ENCODE measurements at regions of chr2 and their contacts with region 1.

Region 1: DNA sequence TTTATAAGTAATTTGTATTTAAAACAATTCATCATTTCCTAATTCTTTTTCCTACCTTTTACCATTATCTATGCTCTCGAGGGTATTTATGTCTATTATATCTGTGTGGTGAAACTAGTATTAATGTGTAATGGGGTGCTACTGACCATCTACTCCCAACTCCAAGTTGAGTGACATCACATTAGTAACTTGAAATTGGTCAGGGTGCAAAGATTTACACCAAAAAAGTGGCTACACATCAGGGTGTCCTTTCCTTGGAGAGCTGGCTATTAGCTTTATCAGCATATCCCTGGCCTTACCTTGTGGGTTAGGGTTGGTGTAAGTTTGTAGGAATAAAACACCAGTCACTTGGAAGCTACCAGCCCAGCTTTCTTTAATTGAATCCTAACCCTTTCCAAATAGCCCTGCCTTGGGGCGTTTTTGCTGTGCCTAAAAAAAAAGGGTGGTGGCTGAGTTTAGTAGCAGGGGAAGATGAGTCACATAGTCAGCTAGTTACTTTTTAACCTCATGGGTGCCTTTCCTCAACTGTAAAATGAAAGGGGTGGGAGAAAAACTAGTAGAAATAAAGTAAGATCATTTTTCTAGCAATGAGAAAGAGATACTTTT is 14.0 kb downstream of the ANXA4 start:
- DNase-seq: peak; percentile 76
- H3K4me3 Mint-ChIP-seq: no peak overlapping the region
- H3K27ac Mint-ChIP-seq: peak overlapping the region; percentile 48
- H3K4me1 Mint-ChIP-seq: peaks cover 25% of the 10 kb centered on the region
- H3K27me3 Mint-ChIP-seq: no peaks in the 10 kb centered on the region

Region 2: DNA sequence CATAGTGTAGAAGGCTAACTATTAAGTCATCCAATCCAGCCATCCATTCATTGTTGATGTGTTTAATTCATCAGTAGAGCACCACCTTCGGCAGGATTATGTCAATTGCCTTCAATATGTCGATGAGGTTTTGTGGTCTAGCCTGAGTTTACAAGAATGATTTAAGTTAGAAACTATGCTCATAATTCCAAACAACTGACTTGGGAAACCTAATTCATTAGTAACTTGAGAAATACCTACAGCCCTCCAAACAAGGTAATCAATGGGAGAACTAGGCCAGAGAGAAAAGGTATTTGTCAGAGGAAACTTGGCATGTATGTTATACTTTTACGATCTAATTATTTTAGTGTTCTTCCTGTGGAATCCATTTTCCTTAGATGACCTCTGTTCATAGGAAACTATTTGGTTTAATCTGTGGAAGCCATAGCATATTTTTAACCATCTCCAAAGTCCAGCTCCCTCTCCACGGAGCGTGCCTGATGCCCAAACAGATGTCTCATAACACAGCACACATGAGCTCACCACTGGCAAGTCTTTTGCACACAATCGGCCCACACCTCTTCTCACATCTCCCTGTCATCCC is 517.4 kb before region 1 on chr2:
- intact Hi-C with region 1: no loop called
- DNase-seq: no peak
- H3K4me3 Mint-ChIP-seq: no peak overlapping the region
- H3K27ac Mint-ChIP-seq: no peak overlapping the region
- H3K4me1 Mint-ChIP-seq: no peaks in the 10 kb centered on the region
- H3K27me3 Mint-ChIP-seq: peaks cover 16% of the 10 kb centered on the region

Region 3: GRCh38 chr2:69724540-69725159 is 31.3 kb before region 1 on chr2:
- intact Hi-C with region 1: no loop called
- DNase-seq: peak; percentile 96
- H3K4me3 Mint-ChIP-seq: peak overlapping the region; percentile 70
- H3K27ac Mint-ChIP-seq: no peak overlapping the region
- H3K4me1 Mint-ChIP-seq: peaks cover 3% of the 10 kb centered on the region
- H3K27me3 Mint-ChIP-seq: peaks cover 3% of the 10 kb centered on the region

Region 4: DNA sequence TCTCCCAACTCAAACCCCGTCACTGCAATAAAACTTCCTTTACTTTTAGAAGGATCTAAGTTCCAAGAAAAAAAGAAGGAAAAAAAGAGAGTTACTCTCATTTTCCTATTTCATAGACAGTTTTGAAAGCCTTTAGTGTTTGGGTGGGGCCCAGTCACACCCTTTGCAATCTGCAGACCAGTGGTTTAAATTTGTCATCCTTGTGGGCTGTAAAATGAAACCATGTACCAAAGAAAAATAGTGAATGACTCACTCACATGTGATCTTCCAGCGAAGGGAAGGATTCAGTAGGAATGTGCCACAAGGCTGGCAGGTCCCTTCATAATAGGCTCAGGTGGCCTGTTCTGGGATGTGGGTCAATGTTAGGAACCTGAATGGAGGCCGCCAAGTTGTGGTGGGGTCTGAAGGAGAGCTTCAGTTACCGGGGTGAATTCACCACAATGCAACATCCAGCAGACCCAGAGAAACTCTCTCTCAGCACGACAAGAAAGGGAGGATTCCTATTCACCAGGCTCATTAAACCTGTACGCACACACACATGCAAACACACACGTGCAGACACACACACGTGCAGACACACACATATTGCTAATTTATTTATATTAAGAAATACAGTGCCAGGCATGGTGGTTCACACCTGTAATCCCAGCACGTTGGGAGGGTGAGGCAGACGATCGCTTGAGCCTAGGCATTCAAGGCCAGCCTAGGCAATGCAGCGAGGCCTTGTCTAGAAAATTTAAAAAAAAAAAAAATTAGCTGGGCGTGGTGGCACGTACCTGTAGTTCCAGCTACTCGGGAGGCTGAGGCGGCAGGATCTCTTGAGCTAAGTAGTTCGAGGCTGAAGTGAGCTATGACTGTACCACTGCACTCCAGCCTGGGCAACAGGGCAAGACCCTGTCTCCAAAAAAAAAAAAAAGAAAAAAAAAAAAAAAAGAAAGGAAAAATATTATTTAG is 14.5 kb after region 1 on chr2:
- intact Hi-C with region 1: loop called (anchors 2 kb)
- DNase-seq: peak; percentile 80
- H3K4me3 Mint-ChIP-seq: peak overlapping the region; percentile 29
- H3K27ac Mint-ChIP-seq: peak overlapping the region; percentile 77
- H3K4me1 Mint-ChIP-seq: peaks cover 66% of the 10 kb centered on the region
- H3K27me3 Mint-ChIP-seq: no peaks in the 10 kb centered on the region